RWPE1 (cell line): ENCODE measurements at regions of chr6 and their contacts with region 1.

Region 1: DNA sequence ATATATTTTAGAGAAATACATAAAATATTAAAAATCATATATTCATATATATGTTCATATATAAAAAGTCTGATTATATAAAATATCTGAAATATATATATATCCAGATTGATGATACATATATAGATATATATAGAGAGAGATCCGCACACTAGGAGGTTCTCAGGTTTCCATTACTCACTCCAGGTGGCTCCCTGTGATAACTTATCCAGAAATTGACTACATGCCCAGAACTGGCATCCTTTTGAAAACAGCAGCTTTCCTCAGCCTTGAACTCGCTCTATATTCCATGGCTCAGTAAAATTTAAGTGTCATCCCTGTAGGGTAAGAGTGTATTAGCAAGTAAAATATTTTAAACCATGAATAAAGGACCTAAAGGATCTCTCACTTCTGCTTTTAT is 206.8 kb downstream of the TINAG start:
- DNase-seq: peak; percentile 5
- H3K27ac ChIP-seq: no peak overlapping the region
- CTCF ChIP-seq: peak; percentile 17; the same call in 1 of the 2 replicates

Region 2: DNA sequence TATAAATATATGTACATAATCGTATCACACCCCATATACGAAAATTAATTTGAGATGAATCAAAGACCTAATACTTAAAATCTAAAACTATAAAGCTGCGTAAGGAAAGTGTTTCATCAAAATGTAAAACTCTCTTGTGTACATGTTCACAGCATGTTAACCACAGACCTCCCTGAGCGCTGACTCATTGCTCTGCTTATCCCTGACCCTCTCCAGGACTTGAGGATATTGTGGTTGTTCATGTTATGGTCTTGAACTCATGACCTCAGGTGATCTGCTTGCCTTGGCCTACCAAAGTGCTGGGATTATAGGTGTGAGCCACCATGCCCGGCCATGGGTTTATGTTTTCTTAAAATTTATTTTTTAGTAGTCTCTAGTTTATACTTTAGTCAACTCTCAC is 345.7 kb after region 1 on chr6:
- CTCF ChIA-PET with region 1: no interaction called
- POLR2A ChIA-PET with region 1: no interaction called
- DNase-seq: no peak
- H3K27ac ChIP-seq: no peak overlapping the region
- CTCF ChIP-seq: no peak

Region 3: DNA sequence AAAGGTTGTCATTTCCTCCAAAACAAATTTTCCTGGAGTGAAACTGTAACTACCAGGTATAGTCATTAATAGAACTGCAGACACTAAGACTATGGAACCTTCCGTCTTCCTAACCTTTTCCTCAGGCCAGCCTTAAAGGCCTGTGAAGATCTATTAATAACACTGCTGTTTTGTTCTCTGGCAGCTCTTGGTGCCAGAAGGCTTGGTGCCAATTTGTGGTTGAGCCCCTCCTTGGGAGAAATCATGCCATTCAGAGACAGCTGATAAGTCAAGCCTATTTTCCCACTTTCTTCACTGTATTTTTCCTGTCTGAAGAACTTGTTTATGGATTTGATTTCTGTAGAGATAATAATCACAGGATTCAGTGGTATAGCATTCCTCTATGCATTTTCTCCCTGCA is 724.1 kb after region 1 on chr6:
- CTCF ChIA-PET with region 1: interaction called, 11 read pairs
- POLR2A ChIA-PET with region 1: no interaction called
- DNase-seq: no peak
- H3K27ac ChIP-seq: no peak overlapping the region
- CTCF ChIP-seq: no peak

Region 4: DNA sequence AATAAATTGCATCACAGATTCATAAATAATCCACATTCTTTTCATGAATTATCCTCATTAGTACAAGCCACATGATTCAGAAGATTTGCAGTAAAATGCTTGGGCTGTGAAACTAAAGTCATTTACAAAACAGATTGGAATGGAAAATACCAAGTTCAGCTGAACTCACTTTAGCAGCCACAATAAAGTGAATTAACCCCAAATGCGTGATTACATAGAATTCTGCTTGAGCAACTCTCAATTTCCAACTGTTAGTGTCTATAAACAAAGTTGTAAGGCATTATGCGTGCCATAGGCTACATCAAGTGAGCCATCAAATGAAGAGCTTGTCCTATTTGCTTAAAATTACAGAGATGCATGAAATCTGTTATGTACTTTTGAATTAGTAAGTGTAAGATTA is 751.9 kb after region 1 on chr6:
- CTCF ChIA-PET with region 1: no interaction called
- POLR2A ChIA-PET with region 1: no interaction called
- DNase-seq: no peak
- H3K27ac ChIP-seq: no peak overlapping the region
- CTCF ChIP-seq: no peak